K562 (cell line): ENCODE measurements at regions of chr6 and their contacts with region 1.

Region 1: GRCh38 chr6:26421259-26422144 is 18.8 kb upstream of the BTN3A3 start:
- DNase-seq: peak; percentile 87 to 94 (median 92)
- ATAC-seq: peak; percentile 98
- H3K4me3 ChIP-seq: peak overlapping the region; percentile 75
- H3K27ac ChIP-seq: peak overlapping the region; percentile 74
- H3K4me1 ChIP-seq: peaks cover 12 to 17% of the 10 kb centered on the region in 2 experiments; a peak in 3 of 5 replicates
- H3K27me3 ChIP-seq: no peaks in the 10 kb centered on the region
- CTCF ChIP-seq: no peak
- EP300 ChIP-seq: no peak; the same call in 1 of the 2 replicates
- POLR2A ChIP-seq: peak; percentile 67
- RAD21 ChIP-seq: peak in 1 of 2 experiments; percentile 18; a peak in 2 of 4 replicates

Region 2: GRCh38 chr6:26347699-26348098 is 73.8 kb before region 1 on chr6:
- CTCF ChIA-PET with region 1: no interaction called
- POLR2A ChIA-PET with region 1: no interaction called
- in situ Hi-C with region 1: no loop called
- intact Hi-C with region 1: loop called (anchors 2 kb)
- DNase-seq: no peak
- ATAC-seq: no peak
- H3K4me3 ChIP-seq: no peak overlapping the region
- H3K27ac ChIP-seq: peak overlapping the region; percentile 1; the same call in 1 of the 3 replicates
- H3K4me1 ChIP-seq: peaks cover 10 to 55% of the 10 kb centered on the region in 2 experiments
- H3K27me3 ChIP-seq: no peaks in the 10 kb centered on the region
- CTCF ChIP-seq: no peak
- EP300 ChIP-seq: no peak
- POLR2A ChIP-seq: no peak
- RAD21 ChIP-seq: no peak

Region 3: GRCh38 chr6:26389349-26389894 is 32.1 kb before region 1 on chr6:
- CTCF ChIA-PET with region 1: no interaction called
- POLR2A ChIA-PET with region 1: no interaction called
- in situ Hi-C with region 1: no loop called
- intact Hi-C with region 1: loop called (anchors 1 kb)
- DNase-seq: peak in 2 of 4 experiments; percentile 57 to 61
- ATAC-seq: peak; percentile 84
- H3K4me3 ChIP-seq: no peak overlapping the region
- H3K27ac ChIP-seq: no peak overlapping the region; the same call in 2 of the 3 replicates
- H3K4me1 ChIP-seq: peaks cover 0 to 13% of the 10 kb centered on the region in 2 experiments; a peak in 4 of 5 replicates
- H3K27me3 ChIP-seq: no peaks in the 10 kb centered on the region
- CTCF ChIP-seq: peak; percentile 50 to 64 (median 50)
- EP300 ChIP-seq: peak; percentile 37; the same call in 1 of the 2 replicates
- POLR2A ChIP-seq: no peak
- RAD21 ChIP-seq: peak; percentile 69 to 87